Lower leg skin (tissue), 4 donors: ENCODE measurements at regions of chrX and their contacts with region 1.

Region 1: GRCh38 chrX:130916636-130917422 is 13.8 kb upstream of the ENOX2 start:
- DNase-seq: no peak
- H3K4me3 ChIP-seq: no peak overlapping the region
- CTCF ChIP-seq: no peak
- POLR2A ChIP-seq: no peak

Region 2: GRCh38 chrX:130393451-130394074 is 523.3 kb before region 1 on chrX:
- intact Hi-C with region 1: loop called (anchors 10 kb)
- DNase-seq: no peak
- H3K4me3 ChIP-seq: no peak overlapping the region
- CTCF ChIP-seq: no peak
- POLR2A ChIP-seq: no peak